ENCODE measurements at regions of chr22 and their contacts with region 1.

Region 1: DNA sequence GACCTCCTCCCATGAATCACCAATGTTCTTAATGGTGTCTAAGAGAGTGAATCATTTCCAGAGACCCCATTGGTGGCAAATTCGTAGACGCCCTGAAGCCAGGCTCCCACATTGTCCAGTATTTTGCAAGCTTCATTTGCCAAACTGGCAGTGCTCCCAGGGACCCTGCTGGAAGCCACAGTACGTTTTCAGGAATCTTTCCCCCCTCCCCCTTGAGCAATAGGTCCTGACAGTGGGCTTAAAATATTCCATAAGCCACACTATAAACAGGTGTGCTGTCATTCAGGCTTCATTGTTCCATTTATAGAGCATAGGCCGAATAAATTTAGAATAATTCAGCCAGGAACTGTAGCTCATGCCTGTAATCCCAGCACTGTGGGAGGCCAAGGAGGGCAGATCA is 125.3 kb downstream of the MORC2 start:
- DNase-seq: no peak
- H3K4me3 ChIP-seq: no peak overlapping the region
- H3K27ac ChIP-seq: no peak overlapping the region
- H3K4me1 ChIP-seq: peaks cover 26% of the 10 kb centered on the region
- H3K27me3 ChIP-seq: no peaks in the 10 kb centered on the region
- CTCF ChIP-seq: no peak

Region 2: DNA sequence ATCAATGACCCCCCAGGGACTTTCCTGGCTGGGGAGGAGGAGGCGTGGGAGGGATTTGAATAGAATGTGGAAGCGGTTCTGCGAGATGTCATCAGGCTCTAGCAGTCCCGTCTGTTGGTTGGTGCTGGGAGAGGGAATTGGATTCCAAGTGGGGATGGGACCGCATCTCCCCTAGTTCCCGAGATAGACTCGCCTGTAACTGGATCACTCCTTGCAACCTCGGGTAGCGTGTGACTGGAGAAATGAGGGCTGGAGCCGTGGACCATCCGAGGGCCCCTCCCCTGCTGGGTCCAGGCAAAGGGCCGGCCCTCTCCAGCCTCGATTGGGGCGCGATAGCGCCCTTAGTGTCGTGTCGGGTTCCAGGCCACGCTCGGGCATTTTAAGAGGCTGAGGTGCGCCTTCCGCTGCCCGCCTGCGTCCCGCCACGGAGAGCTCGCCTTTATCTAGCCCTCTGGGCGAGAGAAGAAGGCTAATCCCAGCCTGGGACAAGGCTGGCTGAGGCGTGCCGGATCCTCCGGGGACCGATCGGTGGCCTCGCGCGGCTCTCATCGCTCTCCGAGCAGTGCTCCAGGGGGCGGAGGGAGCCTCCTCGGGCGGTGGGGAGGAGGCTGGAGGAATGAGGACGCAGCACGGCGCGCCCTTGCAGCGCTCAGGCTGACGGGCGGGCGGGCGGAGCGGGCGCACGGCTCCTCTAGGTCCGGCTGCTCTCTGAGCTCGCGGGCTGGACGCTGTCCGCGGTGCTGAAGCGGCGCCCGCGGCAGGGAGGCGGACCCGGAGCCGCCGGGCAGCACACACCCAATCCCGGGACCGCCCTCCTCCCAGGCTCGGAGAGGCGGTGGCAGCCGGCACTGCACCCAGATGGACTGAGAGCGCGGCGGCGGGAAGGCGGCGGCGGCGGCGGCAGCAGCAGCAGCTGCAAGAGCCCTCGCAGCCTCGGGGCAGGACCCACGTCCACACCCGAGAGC is 40.8 kb before region 1 on chr22:
- CTCF ChIA-PET with region 1: no interaction called
- dilution Hi-C with region 1: loop called (anchors 5 kb)
- in situ Hi-C with region 1: no loop called
- intact Hi-C with region 1: loop called (anchors 5 kb)
- DNase-seq: peak; percentile 95
- H3K4me3 ChIP-seq: peak overlapping the region; percentile 51 to 57 (median 55)
- H3K27ac ChIP-seq: no peak overlapping the region
- H3K4me1 ChIP-seq: peaks cover 33% of the 10 kb centered on the region
- H3K27me3 ChIP-seq: no peaks in the 10 kb centered on the region
- CTCF ChIP-seq: peak in 1 of 2 donors; percentile 38

Region 3: DNA sequence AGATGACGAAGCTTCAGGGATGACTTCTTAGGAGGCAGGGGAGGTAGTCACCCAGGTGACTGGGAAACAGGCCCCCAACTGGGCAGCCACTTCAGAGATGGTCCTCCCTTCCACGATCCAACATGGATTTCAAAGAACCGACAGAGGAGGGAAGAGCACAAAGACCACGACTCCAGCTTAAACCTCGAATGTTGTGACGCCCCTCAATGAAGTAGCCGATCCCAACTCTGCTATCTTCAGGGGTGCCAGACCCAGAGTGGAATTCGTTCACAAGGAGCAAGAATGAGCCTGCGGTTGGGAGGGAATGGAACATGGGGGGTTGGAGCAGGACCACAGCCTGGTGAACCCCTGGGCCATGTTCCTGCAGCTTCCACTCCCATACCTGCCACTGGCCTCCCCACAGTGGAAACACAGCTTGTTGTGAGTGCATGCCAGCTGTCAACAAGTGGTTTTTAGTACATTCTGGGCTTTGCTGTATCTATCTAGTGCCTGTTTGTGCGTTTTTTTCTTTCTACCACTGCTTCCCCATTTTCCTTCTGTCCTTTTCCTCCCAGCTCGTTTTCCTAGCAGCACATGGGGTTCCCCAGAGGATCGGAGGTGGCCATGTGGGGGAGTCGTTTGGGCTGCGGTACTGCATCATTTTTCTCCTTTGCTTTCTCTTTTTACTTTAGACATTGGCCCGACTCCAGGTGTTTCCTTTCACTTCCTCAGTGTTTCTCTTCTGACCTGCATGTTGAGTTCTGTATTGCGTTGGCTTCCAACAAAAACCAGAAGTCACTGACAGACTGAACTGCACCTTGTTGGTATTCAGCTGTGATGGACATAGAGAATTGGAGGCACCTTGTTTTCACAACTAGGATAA is 59.5 kb after region 1 on chr22:
- CTCF ChIA-PET with region 1: no interaction called
- dilution Hi-C with region 1: loop called (anchors 5 kb)
- in situ Hi-C with region 1: no loop called
- intact Hi-C with region 1: no loop called
- DNase-seq: no peak
- H3K4me3 ChIP-seq: no peak overlapping the region
- H3K27ac ChIP-seq: no peak overlapping the region
- H3K4me1 ChIP-seq: no peaks in the 10 kb centered on the region
- H3K27me3 ChIP-seq: no peaks in the 10 kb centered on the region
- CTCF ChIP-seq: no peak

Region 4: DNA sequence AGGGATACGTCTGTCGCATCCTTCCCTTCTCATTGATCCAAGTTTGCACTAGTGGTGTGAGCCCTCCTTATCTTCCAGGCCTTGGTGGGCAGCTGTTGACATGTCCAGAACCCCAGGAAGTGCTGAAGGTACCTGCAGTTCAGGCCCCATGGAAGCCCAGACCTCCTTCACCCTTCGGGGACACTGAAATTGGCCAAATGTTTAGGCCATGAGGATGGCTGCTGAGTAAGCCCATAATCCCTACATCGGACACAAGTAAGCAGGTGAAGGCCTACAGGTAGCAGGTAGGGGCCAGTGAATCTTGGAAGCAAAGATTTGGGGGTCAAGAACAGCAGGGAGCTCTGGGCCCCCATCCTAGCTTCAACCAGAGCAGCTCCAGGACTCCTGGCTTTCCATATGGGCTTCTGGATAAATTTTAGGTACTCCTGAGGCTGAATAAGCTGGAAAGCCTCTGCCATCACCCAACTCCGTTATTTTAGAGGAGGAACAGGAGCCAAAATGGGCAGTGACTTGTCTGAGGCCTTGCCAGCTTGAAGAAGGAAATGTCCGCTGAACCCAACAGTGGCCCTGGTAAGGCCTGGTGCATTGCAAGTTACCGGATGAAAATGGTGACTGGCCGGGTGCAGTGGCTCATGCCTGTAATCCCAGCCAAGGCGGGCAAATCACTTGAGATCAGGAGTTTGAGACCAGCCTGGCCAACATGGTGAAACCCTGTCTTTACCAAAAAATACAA is 80.1 kb after region 1 on chr22:
- CTCF ChIA-PET with region 1: no interaction called
- dilution Hi-C with region 1: no loop called
- in situ Hi-C with region 1: no loop called
- intact Hi-C with region 1: no loop called
- DNase-seq: no peak
- H3K4me3 ChIP-seq: no peak overlapping the region
- H3K27ac ChIP-seq: no peak overlapping the region
- H3K4me1 ChIP-seq: peaks cover 9% of the 10 kb centered on the region
- H3K27me3 ChIP-seq: no peaks in the 10 kb centered on the region
- CTCF ChIP-seq: no peak

Region 5: DNA sequence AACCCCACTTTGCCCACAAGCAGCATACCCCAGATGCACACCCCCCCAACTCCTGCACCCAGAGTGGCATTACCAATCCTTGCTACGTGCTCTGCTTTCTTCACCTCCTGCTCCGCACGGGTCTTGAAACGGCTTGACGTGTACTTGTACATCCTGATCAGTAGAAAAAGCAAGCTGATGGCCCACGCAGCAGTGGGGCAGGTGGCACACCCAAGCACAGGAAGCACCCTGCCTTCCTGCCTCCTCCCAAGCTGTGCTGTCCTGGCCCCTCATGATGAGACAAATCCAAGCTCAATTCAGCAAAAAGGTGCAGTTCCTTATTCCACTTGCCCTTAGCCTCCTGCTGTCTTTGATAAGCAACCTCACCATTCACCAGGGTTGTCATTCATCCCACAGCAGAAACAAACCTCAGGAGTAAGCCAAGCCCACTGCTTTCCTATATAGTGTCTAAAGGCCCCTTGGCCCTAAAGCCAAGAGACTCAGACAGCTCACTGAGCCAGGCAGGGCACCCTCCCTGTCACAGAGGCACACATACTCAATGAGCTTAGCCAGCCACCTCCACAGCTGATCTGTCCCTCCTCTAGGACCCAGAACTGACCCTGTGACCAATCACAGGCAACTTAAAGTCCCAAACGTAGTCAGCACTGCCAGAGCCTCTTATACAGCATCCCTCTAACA is 97.6 kb after region 1 on chr22:
- CTCF ChIA-PET with region 1: no interaction called
- dilution Hi-C with region 1: no loop called
- in situ Hi-C with region 1: no loop called
- intact Hi-C with region 1: no loop called
- DNase-seq: no peak
- H3K4me3 ChIP-seq: no peak overlapping the region
- H3K27ac ChIP-seq: no peak overlapping the region
- H3K4me1 ChIP-seq: peaks cover 10% of the 10 kb centered on the region
- H3K27me3 ChIP-seq: no peaks in the 10 kb centered on the region
- CTCF ChIP-seq: no peak

Region 6: DNA sequence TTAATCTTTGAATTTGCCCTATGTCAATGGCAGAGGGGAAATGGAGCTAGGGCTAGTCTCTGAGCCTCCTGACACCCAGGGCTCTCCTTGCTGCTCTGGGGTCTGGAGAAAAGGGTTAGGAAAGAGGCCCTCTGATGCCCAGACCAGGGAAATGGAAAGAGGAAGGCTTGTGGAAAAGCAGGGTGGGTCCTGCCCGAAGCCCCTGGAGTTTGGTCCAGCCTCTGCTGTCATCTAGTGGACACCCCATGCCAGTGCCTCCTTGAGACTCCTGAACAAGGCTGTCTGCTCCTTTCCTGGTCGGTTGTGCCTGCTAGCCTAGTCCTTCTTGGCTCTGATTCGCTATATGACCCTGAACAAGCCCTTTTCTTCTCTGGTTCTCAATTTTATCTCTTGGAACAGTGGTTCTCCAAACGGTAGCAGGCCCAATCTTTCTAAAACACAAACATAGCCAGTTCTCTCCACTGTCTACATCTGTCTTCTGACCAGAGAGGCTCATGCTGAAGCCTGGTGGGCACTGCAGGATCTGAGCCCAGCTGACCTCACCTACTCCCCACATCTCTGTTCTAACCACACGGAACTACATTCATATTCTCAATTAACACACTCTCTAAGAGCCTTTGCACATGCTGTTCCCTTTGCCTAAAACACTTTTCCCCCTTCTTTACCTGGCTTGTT is 305.8 kb after region 1 on chr22:
- CTCF ChIA-PET with region 1: no interaction called
- dilution Hi-C with region 1: no loop called
- in situ Hi-C with region 1: no loop called
- intact Hi-C with region 1: no loop called
- DNase-seq: peak; percentile 48
- H3K4me3 ChIP-seq: no peak overlapping the region
- H3K27ac ChIP-seq: no peak overlapping the region
- H3K4me1 ChIP-seq: no peaks in the 10 kb centered on the region
- H3K27me3 ChIP-seq: no peaks in the 10 kb centered on the region
- CTCF ChIP-seq: peak; percentile 98 to 99

Measured in mammary epithelial cell (primary cell).